Activated CD4-positive, alpha-beta memory T cell treated with anti-CD3 and anti-CD28 coated beads for 36 hours (primary cell): ENCODE measurements at regions of chr16 and their contacts with region 1.

Region 1: DNA sequence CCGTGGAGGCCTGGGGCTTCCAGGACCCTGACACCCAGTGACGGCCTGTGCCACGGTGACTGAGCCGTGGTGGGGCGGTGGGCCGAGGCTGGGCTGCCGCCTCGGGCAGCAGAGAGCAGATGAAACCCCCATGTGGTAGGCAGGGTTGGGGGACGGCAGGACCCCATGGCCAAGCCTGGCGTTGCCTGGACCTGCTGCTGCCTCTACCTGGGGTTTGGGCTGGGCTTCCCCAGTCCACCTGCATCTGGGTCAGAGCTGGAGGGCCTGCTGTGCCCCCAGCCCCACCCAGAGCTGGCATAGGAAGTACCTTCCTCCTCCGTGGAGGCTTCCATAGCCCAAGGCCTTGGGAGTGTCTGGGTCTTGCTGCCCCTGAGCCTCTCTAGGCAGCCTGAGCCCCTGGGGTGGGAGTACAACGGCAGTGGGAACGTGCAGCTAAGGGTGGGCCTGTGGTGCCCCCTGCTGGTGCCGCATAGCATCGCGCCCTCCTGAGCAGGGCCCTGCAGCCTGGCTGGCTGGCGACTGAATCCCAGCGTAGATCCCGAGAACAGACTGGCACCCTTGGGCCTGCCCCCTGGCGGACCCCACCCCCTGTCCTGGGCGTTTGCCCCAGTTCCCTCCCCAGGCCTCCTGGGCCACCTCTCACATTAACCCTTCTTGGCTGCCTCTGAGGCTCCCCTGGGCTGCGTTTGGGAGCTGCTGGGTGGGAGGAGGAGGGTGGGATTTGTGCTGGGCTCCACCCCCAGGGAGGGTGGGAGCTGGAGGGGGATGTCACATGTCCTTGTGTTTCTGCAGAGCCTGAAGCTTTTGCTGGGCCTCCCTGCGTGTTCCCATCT is 12.6 kb upstream of the ATP6V0C start:
- DNase-seq: peak; percentile 85
- H3K4me3 Mint-ChIP-seq: no peak overlapping the region
- H3K27ac Mint-ChIP-seq: no peak overlapping the region
- H3K4me1 Mint-ChIP-seq: no peaks in the 10 kb centered on the region
- H3K27me3 Mint-ChIP-seq: no peaks in the 10 kb centered on the region

Region 2: GRCh38 chr16:2194852-2195321 is 306.2 kb before region 1 on chr16:
- CTCF ChIA-PET with region 1: interaction called, 21 read pairs
- POLR2A ChIA-PET with region 1: no interaction called
- intact Hi-C with region 1: loop called (anchors 10 kb)
- DNase-seq: peak; percentile 67
- H3K4me3 Mint-ChIP-seq: no peak overlapping the region
- H3K27ac Mint-ChIP-seq: no peak overlapping the region
- H3K4me1 Mint-ChIP-seq: peaks cover 4% of the 10 kb centered on the region
- H3K27me3 Mint-ChIP-seq: peaks cover 28% of the 10 kb centered on the region

Region 3: DNA sequence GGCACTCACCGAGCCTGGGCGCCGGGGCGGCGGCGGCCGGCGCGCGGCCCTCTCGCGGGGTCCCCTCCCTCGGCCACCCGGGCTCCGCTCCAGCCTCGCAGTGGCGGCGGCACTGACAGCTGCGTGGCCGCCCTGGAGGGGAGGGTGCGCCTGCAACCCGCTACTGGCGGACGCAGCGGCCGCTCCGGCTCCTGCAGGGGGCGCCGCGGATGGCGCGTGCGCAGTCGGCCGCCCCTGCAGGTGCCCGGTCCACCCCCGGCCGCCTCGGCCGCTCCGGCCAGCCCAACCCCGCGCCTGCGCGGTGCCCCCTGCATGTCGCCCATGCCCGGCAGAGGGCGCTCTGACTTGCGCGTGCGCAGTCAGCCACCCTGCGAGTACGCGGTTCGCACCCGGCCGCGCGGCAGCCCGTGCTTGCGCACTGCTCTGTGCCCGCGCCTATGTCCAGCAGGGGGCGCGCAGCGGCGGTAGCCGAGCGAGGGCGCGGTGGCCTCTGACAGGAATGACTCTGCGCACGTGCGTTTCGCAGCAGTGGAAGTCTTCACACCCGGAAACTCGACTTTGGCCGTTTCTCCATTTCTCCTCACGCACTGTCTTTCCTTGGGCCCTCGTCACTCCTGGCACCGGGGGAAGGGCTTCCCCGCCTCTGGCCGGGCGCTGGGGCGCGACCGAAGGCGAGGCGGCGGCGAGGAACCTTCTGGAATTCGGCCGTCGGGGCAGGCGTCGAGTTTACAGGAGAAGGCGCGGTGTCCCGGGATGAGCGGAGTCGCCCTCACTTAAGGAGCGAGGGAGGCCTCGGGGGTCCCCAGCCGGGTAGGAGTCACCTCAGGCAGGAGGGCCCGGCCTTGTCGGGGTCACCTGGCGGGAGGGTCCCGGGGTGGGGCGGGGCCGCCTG is 160.3 kb before region 1 on chr16 and contains the start of gene ABCA3:
- CTCF ChIA-PET with region 1: interaction called, 4 read pairs
- POLR2A ChIA-PET with region 1: no interaction called
- intact Hi-C with region 1: loop called (anchors 2 kb)
- DNase-seq: peak; percentile 98
- H3K4me3 Mint-ChIP-seq: peak within 1 kb of the TSS; percentile 76
- H3K27ac Mint-ChIP-seq: no peak within 1 kb of the TSS
- H3K4me1 Mint-ChIP-seq: peaks cover 22% of the 10 kb centered on the region
- H3K27me3 Mint-ChIP-seq: peaks cover 4% of the 10 kb centered on the region
- total RNA-seq, gene ABCA3: 6.1 to 6.4 TPM

Region 4: GRCh38 chr16:2365397-2366294 is 135.5 kb before region 1 on chr16:
- CTCF ChIA-PET with region 1: no interaction called
- POLR2A ChIA-PET with region 1: no interaction called
- intact Hi-C with region 1: no loop called
- DNase-seq: no peak
- H3K4me3 Mint-ChIP-seq: no peak overlapping the region
- H3K27ac Mint-ChIP-seq: no peak overlapping the region
- H3K4me1 Mint-ChIP-seq: no peaks in the 10 kb centered on the region
- H3K27me3 Mint-ChIP-seq: peaks cover 30% of the 10 kb centered on the region

Region 5: GRCh38 chr16:2459647-2460390 is 41.3 kb before region 1 on chr16 and contains the start of gene TEDC2:
- CTCF ChIA-PET with region 1: interaction called, 10 read pairs
- POLR2A ChIA-PET with region 1: no interaction called
- intact Hi-C with region 1: no loop called
- DNase-seq: peak; percentile 98
- H3K4me3 Mint-ChIP-seq: peak within 1 kb of the TSS; percentile 77
- H3K27ac Mint-ChIP-seq: peak within 1 kb of the TSS; percentile 64
- H3K4me1 Mint-ChIP-seq: peaks cover 7% of the 10 kb centered on the region
- H3K27me3 Mint-ChIP-seq: no peaks in the 10 kb centered on the region
- total RNA-seq, gene TEDC2: 23.9 to 24.3 TPM

Region 6: DNA sequence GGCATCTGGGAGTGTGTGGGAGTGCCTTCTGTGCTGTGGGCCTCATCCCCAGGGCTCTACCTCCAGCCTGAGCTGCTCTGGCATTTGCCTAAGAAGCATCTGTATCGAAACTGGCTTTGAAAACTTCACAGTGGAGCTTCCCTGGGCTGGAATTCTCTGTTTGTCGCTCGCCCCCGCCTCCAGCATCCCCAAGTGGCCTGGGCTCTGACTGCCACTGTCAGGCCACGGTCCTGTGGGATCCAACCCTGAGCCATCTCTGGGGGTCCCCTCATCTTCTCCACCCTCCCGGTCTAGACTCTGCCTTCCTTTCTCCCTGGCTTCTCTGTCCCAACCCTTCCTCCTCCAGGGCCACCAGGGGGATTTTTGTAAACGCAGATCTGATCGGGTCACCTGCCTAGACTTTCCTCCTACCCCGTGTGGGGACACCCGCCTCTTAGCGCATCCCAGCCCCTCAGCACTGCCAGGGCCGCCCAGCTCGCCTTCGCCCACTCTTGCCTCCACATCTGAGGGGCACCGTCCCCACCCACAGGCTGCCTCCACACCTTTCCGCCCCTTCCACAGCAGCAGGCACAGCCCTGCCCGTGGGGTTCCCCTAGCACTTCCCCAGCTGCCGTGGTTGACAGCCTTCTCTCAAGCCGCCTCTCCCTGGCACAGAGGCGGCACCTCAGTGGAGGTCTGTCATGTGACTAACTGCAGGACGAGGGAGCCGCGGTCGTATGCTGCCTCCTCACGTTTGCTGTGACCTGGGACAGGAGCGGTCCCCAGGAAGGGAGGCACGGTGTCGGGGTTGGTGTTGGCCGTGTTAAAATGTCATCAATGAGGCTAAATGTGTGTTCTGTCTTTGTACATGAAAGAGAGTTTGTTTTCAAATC is 14.3 kb before region 1 on chr16:
- CTCF ChIA-PET with region 1: interaction called, 14 read pairs
- POLR2A ChIA-PET with region 1: no interaction called
- intact Hi-C with region 1: no loop called
- DNase-seq: peak; percentile 89
- H3K4me3 Mint-ChIP-seq: peak overlapping the region; percentile 41
- H3K27ac Mint-ChIP-seq: peak overlapping the region; percentile 38
- H3K4me1 Mint-ChIP-seq: peaks cover 13% of the 10 kb centered on the region
- H3K27me3 Mint-ChIP-seq: no peaks in the 10 kb centered on the region